Activated B cell treated with CpG ODN at 0.5 μM for 24 hours (primary cell): ENCODE measurements at regions of chr20 and their contacts with region 1.

Region 1: DNA sequence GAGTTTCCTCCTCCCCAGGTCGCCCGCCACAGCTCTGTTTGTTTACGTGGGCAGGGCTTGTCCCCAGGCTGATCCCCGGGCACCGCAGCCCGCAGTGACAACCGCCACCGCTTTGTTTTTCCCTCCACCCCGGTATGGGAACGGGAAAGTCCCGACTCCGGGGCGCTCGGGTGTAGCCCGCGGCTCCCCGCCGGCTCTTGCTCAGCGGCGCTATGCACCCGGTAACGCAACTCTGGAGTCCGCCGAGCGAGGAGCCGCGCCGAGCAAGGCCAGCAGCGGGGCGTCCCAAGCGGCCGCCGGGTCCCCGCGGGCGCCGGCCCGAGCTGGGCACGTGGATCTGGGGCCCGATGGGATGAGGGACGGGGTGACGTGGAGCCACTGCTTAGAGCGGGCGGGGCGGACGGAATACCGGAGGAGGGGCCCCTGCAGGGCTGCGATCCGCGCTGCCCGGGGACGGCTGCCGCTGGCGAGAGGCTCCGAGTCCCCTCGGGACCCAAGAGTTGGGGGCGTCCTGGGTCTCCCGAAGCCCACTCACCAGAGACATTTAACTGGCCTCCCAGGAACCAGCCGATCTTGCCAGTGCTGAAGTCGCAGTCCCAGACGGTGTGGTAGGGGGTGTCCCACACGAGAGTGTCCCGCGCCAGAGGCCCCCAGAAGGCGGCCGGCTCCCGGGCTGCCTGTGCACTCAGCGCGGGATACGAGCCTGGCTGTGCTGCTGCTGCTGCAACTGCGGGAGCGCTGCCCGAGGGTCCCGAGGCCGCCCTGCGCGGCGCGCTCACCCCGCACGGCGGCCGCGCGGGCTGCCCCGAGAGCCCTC is 497 bp downstream of the ACSS1 start:
- DNase-seq: peak; percentile 72
- ATAC-seq: peak; percentile 42
- H3K4me3 Mint-ChIP-seq: peak overlapping the region; percentile 89
- H3K27ac Mint-ChIP-seq: peak overlapping the region; percentile 93
- H3K4me1 Mint-ChIP-seq: peaks cover 61% of the 10 kb centered on the region
- H3K27me3 Mint-ChIP-seq: no peaks in the 10 kb centered on the region
- CTCF ChIP-seq: no peak

Region 2: DNA sequence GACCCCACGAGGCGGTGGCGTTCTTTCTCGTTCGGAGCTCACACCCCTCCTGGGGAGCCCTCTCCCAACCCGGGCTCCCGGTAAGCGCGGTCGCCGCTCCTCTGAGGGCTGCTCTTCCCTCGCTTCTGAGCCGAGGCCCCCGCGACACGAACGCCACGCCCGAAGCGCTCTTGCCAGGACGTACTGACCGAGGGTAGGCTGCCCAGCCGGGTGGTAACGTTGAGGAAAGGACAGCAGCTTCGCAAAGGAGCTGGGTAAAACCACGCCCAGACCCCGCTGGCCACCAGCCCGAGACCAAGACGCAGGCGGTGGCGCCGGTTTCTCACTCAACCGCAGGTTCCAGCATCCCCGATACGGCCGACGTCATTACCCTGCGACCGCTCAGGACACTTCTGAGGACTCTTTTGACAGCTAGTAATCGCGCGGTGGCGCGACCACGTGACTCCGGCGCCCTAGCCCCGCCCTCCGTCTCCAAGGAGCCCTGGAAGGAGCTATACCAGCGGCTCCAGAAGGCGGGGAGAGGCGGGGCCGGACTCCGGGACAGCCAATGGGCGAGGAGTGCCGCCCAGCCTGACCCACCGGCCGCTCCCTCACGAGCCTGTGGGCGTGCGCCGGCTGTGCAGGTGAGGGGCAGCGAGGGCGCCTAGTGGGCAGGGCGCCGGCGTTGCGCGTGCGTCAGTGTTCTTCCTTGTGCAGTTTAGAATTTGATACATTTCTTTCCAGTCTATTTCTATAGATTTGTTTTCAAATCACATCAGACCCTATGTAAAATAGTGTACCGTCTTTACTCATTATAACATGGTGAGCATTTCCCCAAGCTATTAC is 1699.5 kb before region 1 on chr20:
- CTCF ChIA-PET with region 1: no interaction called
- POLR2A ChIA-PET with region 1: interaction called, 3 read pairs
- intact Hi-C with region 1: loop called (anchors 5 kb)
- DNase-seq: peak; percentile 100
- ATAC-seq: peak; percentile 80
- H3K4me3 Mint-ChIP-seq: peak overlapping the region; percentile 90
- H3K27ac Mint-ChIP-seq: peak overlapping the region; percentile 94
- H3K4me1 Mint-ChIP-seq: peaks cover 30% of the 10 kb centered on the region
- H3K27me3 Mint-ChIP-seq: no peaks in the 10 kb centered on the region
- CTCF ChIP-seq: no peak

Region 3: GRCh38 chr20:25042531-25043498 is 14.6 kb before region 1 on chr20:
- CTCF ChIA-PET with region 1: interaction called, 3 read pairs
- POLR2A ChIA-PET with region 1: interaction called, 54 read pairs
- intact Hi-C with region 1: loop called (anchors 1 kb)
- DNase-seq: peak; percentile 57
- ATAC-seq: peak; percentile 92
- H3K4me3 Mint-ChIP-seq: peak overlapping the region; percentile 51
- H3K27ac Mint-ChIP-seq: peak overlapping the region; percentile 90
- H3K4me1 Mint-ChIP-seq: peaks cover 70% of the 10 kb centered on the region
- H3K27me3 Mint-ChIP-seq: no peaks in the 10 kb centered on the region
- CTCF ChIP-seq: no peak

Region 4: GRCh38 chr20:25247956-25248785 is 190.7 kb after region 1 on chr20 and contains the start of gene PYGB:
- CTCF ChIA-PET with region 1: no interaction called
- POLR2A ChIA-PET with region 1: interaction called, 7 read pairs
- intact Hi-C with region 1: loop called (anchors 1 kb)
- DNase-seq: peak; percentile 77
- ATAC-seq: peak; percentile 87
- H3K4me3 Mint-ChIP-seq: peak within 1 kb of the TSS; percentile 94
- H3K27ac Mint-ChIP-seq: peak within 1 kb of the TSS; percentile 86
- H3K4me1 Mint-ChIP-seq: peaks cover 25% of the 10 kb centered on the region
- H3K27me3 Mint-ChIP-seq: peaks cover 10% of the 10 kb centered on the region
- CTCF ChIP-seq: no peak
- total RNA-seq, gene PYGB: 21.5 and 23.5 TPM in 2 replicates

Region 5: DNA sequence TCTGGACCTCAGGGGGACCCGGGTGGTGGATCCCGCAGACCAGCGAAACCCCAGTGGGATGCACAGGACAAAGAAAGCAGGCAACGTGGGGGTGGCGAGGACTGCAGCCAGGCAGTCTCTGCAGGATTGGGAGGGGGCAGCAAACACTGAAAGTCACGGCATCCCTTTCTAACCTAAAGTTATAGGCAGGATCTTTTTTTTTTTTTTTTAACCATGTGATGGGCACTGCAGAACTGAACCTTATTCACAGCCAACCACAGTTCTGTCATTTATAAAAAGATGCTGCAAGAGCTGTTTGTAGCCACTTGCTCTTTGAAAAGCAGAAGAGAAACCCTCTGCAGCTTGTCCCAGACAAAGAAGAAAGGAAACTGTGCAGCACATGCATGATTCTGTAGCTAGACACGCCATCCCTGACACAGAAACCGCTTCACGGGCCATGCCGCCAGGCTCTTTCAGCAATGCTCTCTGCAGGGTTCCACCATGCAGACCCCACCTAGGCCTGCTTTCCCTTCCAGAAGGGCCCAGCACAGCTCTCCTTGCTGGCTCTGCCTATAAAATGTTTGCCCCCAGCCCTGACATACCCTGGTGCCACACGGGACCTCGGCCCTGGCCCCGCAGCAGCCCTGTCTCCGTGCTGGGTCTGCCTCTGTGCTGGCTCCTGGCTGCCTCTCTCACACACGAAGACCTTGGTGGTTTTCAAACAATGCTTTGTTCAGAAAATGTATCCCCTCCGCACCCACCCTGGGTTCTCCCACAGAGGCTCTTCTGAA is 261.2 kb after region 1 on chr20:
- CTCF ChIA-PET with region 1: no interaction called
- POLR2A ChIA-PET with region 1: no interaction called
- intact Hi-C with region 1: loop called (anchors 1 kb)
- DNase-seq: peak; percentile 24
- ATAC-seq: peak; percentile 93
- H3K4me3 Mint-ChIP-seq: peak overlapping the region; percentile 52
- H3K27ac Mint-ChIP-seq: peak overlapping the region; percentile 87
- H3K4me1 Mint-ChIP-seq: peaks cover 39% of the 10 kb centered on the region
- H3K27me3 Mint-ChIP-seq: no peaks in the 10 kb centered on the region
- CTCF ChIP-seq: no peak

Region 6: DNA sequence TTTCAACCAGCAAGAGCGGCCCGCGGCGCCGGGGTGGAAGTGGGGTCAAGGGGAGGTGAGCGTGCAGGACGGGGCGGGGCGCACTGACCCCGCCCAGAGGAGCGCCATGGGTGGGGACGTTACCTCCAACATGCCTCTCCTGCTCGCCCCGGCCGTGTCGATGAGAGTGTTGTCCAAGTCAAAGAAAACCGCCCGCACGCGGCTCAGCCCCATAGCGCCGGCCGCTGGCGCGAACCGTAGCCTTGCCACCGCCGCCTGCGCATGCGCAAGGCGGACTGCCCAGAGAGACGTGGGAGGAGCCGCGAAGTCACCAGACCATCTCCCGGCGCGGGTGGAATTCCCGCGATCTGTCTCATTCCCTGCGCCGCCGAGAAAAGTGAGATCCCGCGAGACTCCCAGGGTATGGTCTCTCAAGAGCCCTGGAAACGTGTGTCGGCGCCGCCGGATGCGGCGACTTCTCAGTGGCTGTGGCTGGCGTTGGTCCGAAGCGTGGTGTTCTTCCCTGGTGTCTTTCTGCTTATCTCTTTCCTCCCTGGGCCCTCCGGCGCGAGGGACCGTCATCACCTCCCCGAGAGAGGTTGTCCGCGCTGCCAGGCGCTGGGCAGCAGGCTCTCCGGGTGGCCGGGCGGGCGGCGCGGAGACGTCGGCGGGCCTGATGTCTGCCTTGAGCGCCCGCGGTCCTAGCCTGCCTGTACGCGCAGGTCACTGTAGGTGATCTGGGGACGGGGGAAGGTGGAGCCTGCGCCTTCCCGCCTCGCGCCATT is 566.5 kb after region 1 on chr20 and contains the start of gene NANP:
- CTCF ChIA-PET with region 1: no interaction called
- POLR2A ChIA-PET with region 1: no interaction called
- intact Hi-C with region 1: loop called (anchors 1 kb)
- DNase-seq: peak; percentile 88
- ATAC-seq: peak; percentile 84
- H3K4me3 Mint-ChIP-seq: peak within 1 kb of the TSS; percentile 92
- H3K27ac Mint-ChIP-seq: peak within 1 kb of the TSS; percentile 92
- H3K4me1 Mint-ChIP-seq: peaks cover 25% of the 10 kb centered on the region
- H3K27me3 Mint-ChIP-seq: no peaks in the 10 kb centered on the region
- CTCF ChIP-seq: no peak
- total RNA-seq, gene NANP: 2.3 and 2.7 TPM in 2 replicates